Naive thymus-derived CD8-positive, alpha-beta T cell (primary cell): ENCODE measurements at regions of chr13 and their contacts with region 1.

Region 1: DNA sequence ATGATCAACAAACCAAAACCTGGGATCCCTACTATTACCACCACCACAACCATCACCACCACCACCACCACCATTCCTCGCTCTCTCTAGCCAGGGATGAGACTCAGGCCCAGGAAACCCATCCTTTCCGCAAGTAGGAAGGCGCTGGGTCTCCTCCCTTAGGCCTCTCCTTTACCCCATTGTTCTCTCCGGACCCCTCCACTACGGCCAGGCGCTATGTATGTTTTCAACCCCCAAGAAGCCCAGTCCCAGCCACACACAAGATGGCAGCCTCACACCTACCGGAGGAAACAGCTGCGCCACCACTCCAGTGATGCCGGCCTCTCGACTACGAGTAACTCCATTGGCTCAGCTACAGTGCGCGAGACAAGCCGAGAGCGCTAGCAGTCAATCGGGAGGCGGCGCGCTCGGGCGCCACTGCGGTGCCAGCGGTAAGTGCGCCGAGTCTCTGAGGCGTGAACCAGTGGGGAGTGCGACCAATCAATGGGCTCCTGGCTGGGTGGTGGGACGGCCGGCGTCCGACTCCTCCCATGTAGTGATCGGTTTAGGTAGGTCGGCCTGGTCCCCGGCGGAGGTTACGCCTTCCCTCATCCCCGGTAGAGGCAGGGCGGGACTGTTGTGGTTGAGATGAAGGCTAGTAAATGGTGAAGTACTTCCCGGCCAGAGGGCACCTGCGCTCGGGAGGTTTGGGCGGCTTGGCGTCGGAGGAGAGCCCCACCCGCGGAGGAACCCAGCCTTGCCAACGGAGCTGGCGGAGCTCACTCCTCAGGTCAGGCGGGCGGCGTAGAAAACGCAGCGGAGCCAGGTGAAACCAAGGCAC is at the starts of genes CAB39L and SETDB2:
- DNase-seq: peak; percentile 95 to 100 (median 99)
- ATAC-seq: peak; percentile 90
- H3K4me3 Mint-ChIP-seq: peak within 1 kb of the TSS; percentile 88 to 100 (median 98)
- H3K27ac Mint-ChIP-seq: peak within 1 kb of the TSS; percentile 96 to 100 (median 98)
- H3K4me1 Mint-ChIP-seq: peaks cover 12 to 74% (median 45%) of the 10 kb centered on the region in 4 donors
- H3K27me3 Mint-ChIP-seq: no peaks in the 10 kb centered on the region
- polyA plus RNA-seq, gene CAB39L: 4.3 to 5.2 (median 4.3) TPM
- polyA plus RNA-seq, gene SETDB2: 13.3 to 14.7 (median 13.7) TPM

Region 2: GRCh38 chr13:48975856-48976575 is 467.9 kb before region 1 on chr13 and contains the start of gene FNDC3A:
- POLR2A ChIA-PET with region 1: interaction called, 18 read pairs
- DNase-seq: peak; percentile 78 to 91 (median 85)
- ATAC-seq: peak; percentile 69 to 75
- H3K4me3 Mint-ChIP-seq: peak within 1 kb of the TSS; percentile 93 to 100 (median 96)
- H3K27ac Mint-ChIP-seq: peak within 1 kb of the TSS; percentile 82 to 100 (median 99)
- H3K4me1 Mint-ChIP-seq: peaks cover 20 to 50% (median 42%) of the 10 kb centered on the region in 4 donors
- H3K27me3 Mint-ChIP-seq: no peaks in the 10 kb centered on the region
- polyA plus RNA-seq, gene FNDC3A: 7.9 to 9.7 (median 8.9) TPM

Region 3: DNA sequence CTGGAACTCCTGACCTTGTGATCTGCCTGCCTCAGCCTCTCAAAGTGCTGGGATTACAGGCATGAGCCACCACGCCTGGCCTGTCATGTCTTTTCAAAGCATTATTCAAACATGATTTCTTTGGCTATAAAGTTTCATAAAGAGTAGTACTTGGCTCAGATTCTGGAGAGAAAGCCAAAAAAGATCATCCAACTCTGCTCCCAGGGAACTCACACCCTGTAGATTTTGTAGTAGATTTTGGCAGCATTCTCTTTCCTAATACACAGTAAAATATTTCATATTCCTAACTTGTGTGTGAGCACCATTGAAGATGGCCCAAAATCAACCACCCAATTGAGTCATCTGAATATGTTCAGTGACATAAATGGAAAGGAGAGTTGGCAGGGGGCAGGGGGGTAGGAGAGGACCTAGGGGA is 48.5 kb before region 1 on chr13:
- POLR2A ChIA-PET with region 1: no interaction called
- DNase-seq: no peak
- ATAC-seq: no peak
- H3K4me3 Mint-ChIP-seq: no peak overlapping the region
- H3K27ac Mint-ChIP-seq: no peak overlapping the region
- H3K4me1 Mint-ChIP-seq: no peaks in the 10 kb centered on the region
- H3K27me3 Mint-ChIP-seq: peaks cover 0 to 2% (median 0%) of the 10 kb centered on the region in 5 donors

Region 4: GRCh38 chr13:49495783-49496762 is 52.2 kb after region 1 on chr13 and contains the start of gene PHF11:
- POLR2A ChIA-PET with region 1: interaction called, 82 read pairs
- DNase-seq: peak; percentile 75 to 91 (median 80)
- ATAC-seq: peak; percentile 81 to 85
- H3K4me3 Mint-ChIP-seq: peak within 1 kb of the TSS; percentile 89 to 99 (median 98)
- H3K27ac Mint-ChIP-seq: peak within 1 kb of the TSS; percentile 90 to 100 (median 99)
- H3K4me1 Mint-ChIP-seq: peaks cover 22 to 54% (median 46%) of the 10 kb centered on the region in 4 donors
- H3K27me3 Mint-ChIP-seq: no peaks in the 10 kb centered on the region
- polyA plus RNA-seq, gene PHF11: 75.9 to 88.3 (median 80.4) TPM

Region 5: DNA sequence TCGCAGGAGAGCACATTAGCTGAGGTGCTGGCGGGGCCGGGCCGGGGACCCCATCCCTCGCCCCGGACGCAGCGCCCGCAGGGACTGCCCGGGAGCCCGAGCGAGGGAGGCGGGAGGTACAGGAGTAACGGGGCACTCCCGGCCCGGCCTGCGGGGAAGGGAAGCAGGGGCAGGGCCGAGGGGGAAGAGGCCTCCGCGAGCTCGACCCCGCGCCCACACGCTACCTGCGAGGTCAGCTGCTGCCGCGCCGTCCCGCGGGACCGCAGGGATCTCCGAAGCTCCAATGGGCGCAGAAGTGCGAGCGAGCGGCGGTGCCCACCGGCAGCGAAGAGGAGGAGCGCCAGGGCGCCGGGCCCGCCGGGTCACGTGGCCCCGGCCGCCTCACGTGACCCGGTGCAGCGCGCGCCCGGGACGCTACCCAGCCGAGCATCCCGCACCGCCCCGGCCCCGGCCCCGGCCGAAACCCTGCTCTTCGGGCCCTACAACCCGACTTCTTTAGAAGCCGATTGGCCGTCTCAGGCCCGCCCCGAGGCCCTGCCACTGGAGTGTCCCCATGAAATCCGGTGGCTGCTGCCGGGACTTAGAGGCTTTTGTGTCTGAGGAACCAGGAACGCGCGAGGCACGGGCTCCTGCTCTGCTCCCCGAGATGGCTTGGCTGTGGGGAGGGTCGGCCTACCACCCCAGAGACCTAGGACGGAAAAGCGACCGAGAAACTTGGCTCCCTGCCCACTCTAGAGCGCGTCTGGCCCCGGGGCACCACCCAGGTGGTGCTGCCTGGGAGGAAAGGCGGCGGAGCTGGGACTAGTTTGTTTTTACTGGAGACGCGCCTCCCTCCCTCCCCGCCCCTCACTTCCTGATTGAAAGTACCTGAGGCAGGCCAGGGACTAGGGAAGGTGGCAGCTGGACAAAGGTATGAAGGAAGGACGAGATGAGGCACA is 141.6 kb after region 1 on chr13 and contains the start of gene RCBTB1:
- POLR2A ChIA-PET with region 1: interaction called, 15 read pairs
- DNase-seq: peak; percentile 53 to 83 (median 70)
- ATAC-seq: peak; percentile 95
- H3K4me3 Mint-ChIP-seq: peak within 1 kb of the TSS; percentile 84 to 99 (median 96)
- H3K27ac Mint-ChIP-seq: peak within 1 kb of the TSS; percentile 81 to 94 (median 92)
- H3K4me1 Mint-ChIP-seq: peaks cover 11 to 39% (median 36%) of the 10 kb centered on the region in 4 donors
- H3K27me3 Mint-ChIP-seq: no peaks in the 10 kb centered on the region
- polyA plus RNA-seq, gene RCBTB1: 6.7 to 8.4 (median 7.9) TPM

Region 6: GRCh38 chr13:49792550-49793324 is 348.8 kb after region 1 on chr13 and contains the start of gene KPNA3:
- POLR2A ChIA-PET with region 1: interaction called, 27 read pairs
- DNase-seq: peak; percentile 90 to 97 (median 94)
- ATAC-seq: peak; percentile 87 to 89
- H3K4me3 Mint-ChIP-seq: peak within 1 kb of the TSS; percentile 84 to 99 (median 98)
- H3K27ac Mint-ChIP-seq: peak within 1 kb of the TSS; percentile 89 to 100 (median 98)
- H3K4me1 Mint-ChIP-seq: peaks cover 17 to 39% (median 32%) of the 10 kb centered on the region in 4 donors
- H3K27me3 Mint-ChIP-seq: peaks cover 0 to 10% (median 3%) of the 10 kb centered on the region in 5 donors
- polyA plus RNA-seq, gene KPNA3: 20.2 to 23.9 (median 20.3) TPM